ENCODE measurements at regions of chr10 and their contacts with region 1.

Region 1: DNA sequence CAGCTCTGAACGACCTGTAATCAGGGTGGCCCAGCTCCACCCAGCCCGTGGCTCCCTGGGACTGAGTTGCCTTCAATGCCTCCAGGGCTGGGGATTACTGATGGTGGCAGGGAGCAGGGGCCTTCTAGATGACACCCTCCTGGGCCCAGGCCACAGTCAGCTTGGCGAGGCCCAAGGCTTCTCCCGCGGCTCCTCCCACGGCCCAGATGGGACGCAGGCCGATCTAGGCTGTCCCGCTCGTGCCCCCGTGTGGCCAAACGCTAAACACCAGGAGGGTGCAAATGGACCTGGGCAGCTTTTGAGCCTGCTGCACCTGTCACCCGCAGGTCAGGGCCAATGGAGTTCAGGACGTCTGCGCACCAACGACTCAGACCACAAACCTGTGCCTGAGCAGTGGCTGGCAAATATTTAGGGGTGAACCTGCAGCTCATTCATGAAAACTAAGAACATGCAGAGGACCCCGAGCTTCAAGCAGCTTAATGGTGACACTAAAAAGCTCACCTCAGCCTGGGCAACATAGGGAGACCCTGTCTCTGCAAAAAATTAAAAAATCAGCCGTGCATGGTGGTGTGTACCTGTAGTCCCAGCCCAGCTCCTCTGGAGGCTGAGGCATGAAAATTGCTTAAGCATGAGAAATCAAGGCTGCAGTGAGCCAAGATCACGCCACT is 43.2 kb downstream of the ASB13 start:
- DNase-seq: no peak
- H3K4me3 ChIP-seq: no peak overlapping the region
- H3K27me3 ChIP-seq: no peaks in the 10 kb centered on the region
- CTCF ChIP-seq: peak; percentile 92

Region 2: GRCh38 chr10:4813023-4813422 is 810.2 kb before region 1 on chr10:
- CTCF ChIA-PET with region 1: interaction called, 10 read pairs
- POLR2A ChIA-PET with region 1: no interaction called
- DNase-seq: peak; percentile 36
- H3K4me3 ChIP-seq: no peak overlapping the region
- H3K27me3 ChIP-seq: no peaks in the 10 kb centered on the region
- CTCF ChIP-seq: no peak

Region 3: DNA sequence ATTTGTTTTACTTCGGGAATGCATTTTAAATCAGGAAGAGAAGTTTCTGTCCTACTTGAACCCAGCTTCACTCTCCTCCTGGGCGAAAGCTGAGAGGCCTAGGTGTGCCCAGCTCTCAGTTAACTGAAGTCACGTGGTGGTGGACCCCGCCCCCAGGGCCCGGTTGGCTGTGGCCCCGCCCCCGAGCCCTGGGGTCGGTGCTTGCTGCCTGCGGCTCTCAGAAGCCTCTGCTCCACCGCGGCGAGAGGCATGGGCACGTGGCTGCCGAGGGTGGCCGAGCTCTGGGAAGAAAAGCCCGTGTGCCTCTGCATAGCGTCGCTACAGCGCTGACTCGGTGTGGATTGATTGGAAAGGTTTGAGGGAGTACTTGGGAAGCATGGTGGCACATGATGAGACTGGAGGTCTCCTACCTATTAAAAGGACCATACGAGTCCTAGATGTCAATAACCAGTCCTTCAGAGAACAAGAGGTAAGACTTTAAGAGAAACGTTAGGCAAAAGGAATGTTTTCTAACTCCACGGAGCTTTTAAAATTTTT is 176.8 kb before region 1 on chr10:
- CTCF ChIA-PET with region 1: interaction called, 493 read pairs
- POLR2A ChIA-PET with region 1: interaction called, 5 read pairs
- DNase-seq: peak; percentile 66
- H3K4me3 ChIP-seq: peak overlapping the region; percentile 69
- H3K27me3 ChIP-seq: no peaks in the 10 kb centered on the region
- CTCF ChIP-seq: no peak

Region 4: GRCh38 chr10:5461914-5462840 is 161.0 kb before region 1 on chr10:
- CTCF ChIA-PET with region 1: interaction called, 20 read pairs
- POLR2A ChIA-PET with region 1: no interaction called
- DNase-seq: no peak
- H3K4me3 ChIP-seq: no peak overlapping the region
- H3K27me3 ChIP-seq: no peaks in the 10 kb centered on the region
- CTCF ChIP-seq: no peak

Region 5: GRCh38 chr10:5548527-5549223 is 74.5 kb before region 1 on chr10:
- CTCF ChIA-PET with region 1: interaction called, 11 read pairs
- POLR2A ChIA-PET with region 1: no interaction called
- DNase-seq: peak; percentile 66
- H3K4me3 ChIP-seq: no peak overlapping the region
- H3K27me3 ChIP-seq: no peaks in the 10 kb centered on the region
- CTCF ChIP-seq: no peak